Activated CD8-positive, alpha-beta memory T cell treated with anti-CD3 and anti-CD28 coated beads, Interleukin-2, amount 10 ng/mL, durations not matched to agents 7 days and 5 days (primary cell): ENCODE measurements at regions of chr9 and their contacts with region 1.

Region 1: DNA sequence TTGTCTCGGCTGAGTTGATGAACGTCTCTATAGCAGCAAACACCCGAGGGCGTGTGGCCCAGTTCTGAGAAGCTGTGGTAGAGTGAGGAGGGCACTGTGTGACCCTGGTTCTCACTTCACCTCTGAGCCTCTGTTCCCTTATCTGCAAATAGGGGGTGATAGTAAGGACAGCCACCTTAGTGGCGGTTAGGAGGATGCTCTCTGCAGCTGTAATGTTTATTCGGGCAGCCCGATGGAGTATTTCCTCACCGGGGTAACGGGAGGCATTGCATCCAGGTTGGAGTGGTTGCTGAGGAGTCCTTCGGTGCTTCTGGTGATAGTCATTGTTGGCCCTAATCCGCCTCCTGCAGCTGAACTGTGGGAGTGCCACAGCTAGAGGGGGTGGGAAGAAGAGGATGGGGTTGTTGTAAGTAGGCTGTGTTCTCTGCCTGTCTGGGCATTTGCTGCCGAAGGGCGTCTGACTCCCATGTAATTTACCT is 13.9 kb downstream of the PRRC2B start:
- DNase-seq: peak; percentile 76
- ATAC-seq: peak; percentile 74
- H3K4me3 Mint-ChIP-seq: peak overlapping the region; percentile 70
- H3K27ac Mint-ChIP-seq: peak overlapping the region; percentile 86
- H3K4me1 Mint-ChIP-seq: peaks cover 89% of the 10 kb centered on the region
- H3K27me3 Mint-ChIP-seq: no peaks in the 10 kb centered on the region

Region 2: GRCh38 chr9:131246618-131247017 is 161.1 kb before region 1 on chr9:
- CTCF ChIA-PET with region 1: no interaction called
- DNase-seq: no peak
- ATAC-seq: no peak
- H3K4me3 Mint-ChIP-seq: no peak overlapping the region
- H3K27ac Mint-ChIP-seq: no peak overlapping the region
- H3K4me1 Mint-ChIP-seq: peaks cover 5% of the 10 kb centered on the region
- H3K27me3 Mint-ChIP-seq: no peaks in the 10 kb centered on the region

Region 3: DNA sequence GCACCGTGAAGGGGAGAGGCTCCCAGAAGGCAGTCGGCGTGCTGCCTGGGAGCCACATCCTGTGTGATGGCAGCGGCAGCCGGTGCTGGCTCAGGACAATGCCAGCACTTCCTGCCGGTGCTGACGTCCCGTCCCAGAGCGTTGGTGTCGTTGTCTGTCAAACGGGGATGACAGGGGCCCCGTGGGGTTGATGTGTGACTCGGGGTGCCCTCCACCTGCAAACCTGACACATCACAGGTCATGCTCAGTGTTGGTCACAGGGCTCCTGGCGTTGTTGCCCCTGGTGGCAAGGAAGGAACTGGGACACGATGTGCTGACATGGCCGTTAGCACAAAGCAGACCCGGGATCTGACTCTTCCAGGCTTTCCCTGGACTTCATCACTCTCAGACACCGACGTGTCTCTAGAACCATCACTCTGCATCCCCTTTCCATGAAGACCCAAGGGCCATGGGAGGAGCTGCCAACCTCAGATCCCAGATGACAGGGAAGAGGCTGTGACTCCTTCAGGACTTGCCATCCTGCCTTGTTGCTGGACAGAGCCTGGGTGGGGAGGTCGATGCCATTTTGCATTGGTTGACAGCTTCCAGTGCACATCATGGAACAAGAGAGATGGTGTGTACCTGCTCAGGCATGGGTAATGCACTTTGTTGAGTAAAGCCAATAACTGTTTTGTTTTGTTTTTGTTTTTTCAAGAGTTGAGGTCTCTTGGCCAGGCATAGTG is 96.8 kb before region 1 on chr9:
- CTCF ChIA-PET with region 1: no interaction called
- DNase-seq: peak; percentile 82
- ATAC-seq: peak; percentile 98
- H3K4me3 Mint-ChIP-seq: peak overlapping the region; percentile 38
- H3K27ac Mint-ChIP-seq: peak overlapping the region; percentile 68
- H3K4me1 Mint-ChIP-seq: peaks cover 11% of the 10 kb centered on the region
- H3K27me3 Mint-ChIP-seq: no peaks in the 10 kb centered on the region

Region 4: GRCh38 chr9:131366761-131367401 is 40.9 kb before region 1 on chr9:
- CTCF ChIA-PET with region 1: interaction called, 12 read pairs
- DNase-seq: no peak
- ATAC-seq: no peak
- H3K4me3 Mint-ChIP-seq: no peak overlapping the region
- H3K27ac Mint-ChIP-seq: no peak overlapping the region
- H3K4me1 Mint-ChIP-seq: peaks cover 3% of the 10 kb centered on the region
- H3K27me3 Mint-ChIP-seq: no peaks in the 10 kb centered on the region

Region 5: GRCh38 chr9:131394464-131395156 is 13.1 kb before region 1 on chr9:
- CTCF ChIA-PET with region 1: interaction called, 19 read pairs
- DNase-seq: peak; percentile 67
- ATAC-seq: peak; percentile 31
- H3K4me3 Mint-ChIP-seq: peak overlapping the region; percentile 83
- H3K27ac Mint-ChIP-seq: peak overlapping the region; percentile 91
- H3K4me1 Mint-ChIP-seq: peaks cover 47% of the 10 kb centered on the region
- H3K27me3 Mint-ChIP-seq: no peaks in the 10 kb centered on the region

Region 6: DNA sequence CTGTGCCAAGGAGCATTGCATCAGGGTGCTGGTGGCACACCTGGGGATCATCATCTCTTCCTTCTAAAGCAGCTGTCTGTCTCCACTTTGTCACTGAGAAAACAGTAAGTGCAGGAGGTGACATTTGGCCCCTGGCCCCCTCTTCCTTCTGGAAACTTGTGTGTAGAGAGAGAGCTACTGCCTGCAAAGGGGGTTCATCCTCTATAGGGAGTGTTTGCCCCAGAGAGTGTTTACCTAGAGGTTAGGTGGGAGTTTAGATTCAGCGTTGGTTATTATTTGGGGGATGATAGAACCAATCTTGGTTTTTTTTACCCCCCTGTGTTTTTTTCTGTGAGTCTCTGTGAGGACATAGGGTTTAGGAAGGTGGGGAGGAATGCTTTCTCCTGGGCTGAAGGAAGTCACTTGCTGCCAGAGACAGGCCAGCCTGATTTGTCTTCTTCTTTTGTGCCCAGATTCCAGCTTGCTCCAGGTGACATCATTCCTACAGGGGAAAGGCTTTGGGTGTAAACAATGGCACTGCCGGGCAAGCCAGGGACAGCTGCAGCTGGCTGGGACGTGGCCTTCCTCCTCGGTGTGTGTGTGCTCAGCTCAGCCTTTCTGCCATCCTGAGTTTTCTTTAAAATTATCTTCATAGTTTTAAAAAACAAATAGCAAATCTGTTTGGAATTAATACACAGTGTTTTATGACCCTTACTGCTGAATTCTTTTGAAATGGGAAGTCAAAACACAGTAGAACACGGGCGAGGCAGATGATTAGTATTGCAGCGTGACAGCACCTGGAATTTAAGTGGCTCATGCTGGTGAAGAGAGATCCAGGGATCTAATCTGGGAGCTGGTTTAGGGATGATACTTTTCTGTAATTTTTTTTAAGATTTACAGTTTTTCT is 10.6 kb after region 1 on chr9:
- CTCF ChIA-PET with region 1: interaction called, 17 read pairs
- DNase-seq: no peak
- ATAC-seq: no peak
- H3K4me3 Mint-ChIP-seq: peak overlapping the region; percentile 61
- H3K27ac Mint-ChIP-seq: peak overlapping the region; percentile 84
- H3K4me1 Mint-ChIP-seq: peaks cover 86% of the 10 kb centered on the region
- H3K27me3 Mint-ChIP-seq: no peaks in the 10 kb centered on the region